ENCODE measurements at regions of chr2 and their contacts with region 1.

Region 1: DNA sequence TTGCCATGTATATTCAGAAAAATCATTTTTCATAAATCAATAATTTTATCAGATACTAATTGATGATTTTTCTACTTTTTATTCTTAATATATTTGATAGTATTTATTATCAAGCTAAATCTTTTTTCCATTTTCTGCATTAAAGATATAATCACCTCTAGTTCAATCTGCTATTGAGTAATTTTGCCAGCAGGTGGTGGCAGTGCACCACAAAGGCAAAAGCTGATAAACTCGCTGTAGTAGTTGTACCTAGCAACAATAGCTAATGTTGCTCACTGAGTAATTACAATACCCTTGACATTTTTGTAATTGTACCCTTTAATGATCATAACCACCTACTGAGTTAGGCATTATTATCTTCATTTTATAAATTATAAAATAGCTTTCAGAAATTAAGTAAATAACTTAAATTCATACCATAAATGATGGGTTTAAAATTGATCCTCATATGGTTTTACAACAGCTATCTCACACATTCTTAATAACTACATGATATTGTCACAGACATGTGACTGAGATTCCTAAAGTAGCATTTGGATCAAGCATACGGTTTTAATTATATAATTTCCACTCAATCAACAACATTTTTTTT is 52.0 kb upstream of the CALCRL start:
- DNase-seq: peak; percentile 67
- ATAC-seq: peak; percentile 49; the same call in 1 of the 2 replicates
- H3K4me3 Mint-ChIP-seq: no peak overlapping the region
- H3K27ac Mint-ChIP-seq: no peak overlapping the region
- H3K4me1 Mint-ChIP-seq: peaks cover 23% of the 10 kb centered on the region
- H3K27me3 Mint-ChIP-seq: no peaks in the 10 kb centered on the region
- CTCF ChIP-seq: peak; percentile 82

Region 2: DNA sequence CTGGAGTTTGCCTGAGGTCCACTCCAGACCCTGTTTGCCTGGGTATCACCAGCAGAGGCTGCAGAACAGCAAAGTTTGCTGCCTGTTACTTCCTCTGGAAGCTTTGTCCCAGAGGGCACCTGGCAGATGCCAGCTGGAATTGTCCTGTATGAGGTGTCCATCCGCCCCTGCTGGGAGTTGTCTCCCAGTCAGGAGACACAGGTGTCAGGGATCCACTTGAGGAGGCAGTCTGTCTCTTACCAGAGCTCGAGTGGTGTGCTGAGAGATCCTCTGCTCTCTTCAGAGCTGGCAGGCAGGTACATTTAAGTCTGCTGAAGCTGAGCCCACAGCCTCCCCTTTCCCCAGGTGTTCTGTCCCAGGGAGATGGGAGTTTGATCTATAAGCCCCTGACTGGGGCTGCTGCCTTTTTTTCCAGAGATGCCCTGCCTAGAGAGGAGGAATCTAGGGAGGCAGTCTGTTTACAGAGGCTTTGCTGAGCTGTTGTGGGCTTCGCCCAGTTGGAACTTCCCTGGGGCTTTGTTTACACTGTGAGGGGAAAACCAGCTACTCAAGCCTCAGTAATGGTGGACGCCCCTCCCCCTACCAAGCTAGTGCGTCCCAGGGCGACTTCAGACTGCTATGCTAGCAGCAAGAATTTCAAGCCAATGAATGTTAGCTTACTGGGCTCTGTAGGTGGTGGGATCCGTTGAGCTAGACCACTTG is 19.5 kb after region 1 on chr2:
- CTCF ChIA-PET with region 1: interaction called, 12 read pairs
- POLR2A ChIA-PET with region 1: no interaction called
- DNase-seq: peak; percentile 59
- ATAC-seq: peak; percentile 94
- H3K4me3 Mint-ChIP-seq: no peak overlapping the region
- H3K27ac Mint-ChIP-seq: peak overlapping the region; percentile 85
- H3K4me1 Mint-ChIP-seq: peaks cover 22% of the 10 kb centered on the region
- H3K27me3 Mint-ChIP-seq: no peaks in the 10 kb centered on the region
- CTCF ChIP-seq: no peak

Region 3: GRCh38 chr2:187554011-187554703 is 54.1 kb after region 1 on chr2 and contains the start of gene TFPI:
- CTCF ChIA-PET with region 1: interaction called, 10 read pairs
- POLR2A ChIA-PET with region 1: no interaction called
- DNase-seq: no peak
- ATAC-seq: peak; percentile 87
- H3K4me3 Mint-ChIP-seq: 0 out of 2 replicates have a peak within 1 kb of the TSS, but pooled peaks have one; percentile 24
- H3K27ac Mint-ChIP-seq: peak within 1 kb of the TSS; percentile 88
- H3K4me1 Mint-ChIP-seq: peaks cover 25% of the 10 kb centered on the region
- H3K27me3 Mint-ChIP-seq: no peaks in the 10 kb centered on the region
- CTCF ChIP-seq: no peak
- total RNA-seq, gene TFPI: 8.4 to 10.2 TPM (median 8.9 TPM) in 3 replicates

Region 4: DNA sequence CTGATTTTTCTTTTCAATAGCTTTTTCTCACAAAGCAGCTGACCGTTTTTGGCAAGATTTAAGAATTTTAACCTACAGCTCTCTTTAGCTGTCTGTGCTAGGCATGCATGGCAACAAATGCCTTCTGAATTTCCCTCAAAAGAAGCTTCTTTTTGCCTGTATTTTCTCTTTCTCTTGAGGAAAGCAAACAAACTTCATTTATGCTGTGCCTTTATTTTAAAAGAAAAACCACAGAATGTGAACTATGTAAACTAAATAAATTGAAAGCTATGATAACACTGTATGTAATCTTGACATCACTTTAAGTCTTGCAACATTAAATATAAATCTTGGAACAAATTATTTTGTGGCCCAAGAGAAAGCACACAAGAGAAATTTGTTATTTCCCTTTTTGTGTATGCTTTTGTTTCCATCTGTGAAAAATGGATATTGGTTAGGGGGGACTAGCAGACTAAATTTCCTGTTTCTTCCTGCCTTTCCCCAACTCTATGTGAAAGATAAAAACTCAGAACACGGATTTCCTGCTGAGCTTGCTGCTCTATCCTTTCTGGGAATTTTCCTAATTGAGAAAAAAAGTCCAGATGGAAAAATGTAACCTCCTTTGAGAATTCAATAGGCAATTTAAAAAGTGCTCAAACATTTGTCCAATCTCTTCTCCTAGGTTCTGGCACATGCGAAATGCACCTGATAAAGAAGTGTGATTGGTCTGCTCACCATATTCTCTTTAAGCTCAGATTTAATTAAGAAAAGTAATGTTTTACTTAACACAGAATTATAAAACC is 75.1 kb after region 1 on chr2:
- CTCF ChIA-PET with region 1: interaction called, 195 read pairs
- POLR2A ChIA-PET with region 1: no interaction called
- DNase-seq: no peak
- ATAC-seq: no peak
- H3K4me3 Mint-ChIP-seq: no peak overlapping the region
- H3K27ac Mint-ChIP-seq: no peak overlapping the region
- H3K4me1 Mint-ChIP-seq: peaks cover 21% of the 10 kb centered on the region
- H3K27me3 Mint-ChIP-seq: peaks cover 4% of the 10 kb centered on the region; the same call in 1 of the 2 replicates
- CTCF ChIP-seq: no peak

Region 5: GRCh38 chr2:187842978-187843847 is 343.2 kb after region 1 on chr2:
- CTCF ChIA-PET with region 1: interaction called, 21 read pairs
- POLR2A ChIA-PET with region 1: interaction called, 4 read pairs
- DNase-seq: no peak
- ATAC-seq: peak; percentile 80
- H3K4me3 Mint-ChIP-seq: no peak overlapping the region
- H3K27ac Mint-ChIP-seq: no peak overlapping the region
- H3K4me1 Mint-ChIP-seq: peaks cover 3% of the 10 kb centered on the region; the same call in 1 of the 2 replicates
- H3K27me3 Mint-ChIP-seq: 0 out of 2 replicates have a peak, but pooled peaks cover 2% of the 10 kb centered on the region
- CTCF ChIP-seq: peak; percentile 58

Measured in WTC11 (cell line).